HCT116 (cell line): ENCODE measurements at regions of chr19 and their contacts with region 1.

Region 1: GRCh38 chr19:48993175-48994034 is at the starts of genes GYS1 and RUVBL2:
- DNase-seq: peak; percentile 99
- ATAC-seq: peak; percentile 91
- H3K4me3 ChIP-seq: peak within 1 kb of the TSS; percentile 75 to 77
- H3K27ac ChIP-seq: peak within 1 kb of the TSS; percentile 75
- H3K4me1 ChIP-seq: peaks cover 15 to 34% of the 10 kb centered on the region in 2 experiments
- H3K27me3 ChIP-seq: no peaks in the 10 kb centered on the region
- CTCF ChIP-seq: peak; percentile 73 to 85 (median 85)
- POLR2A ChIP-seq: peak; percentile 84
- RAD21 ChIP-seq: no peak; the same call in none of the 2 replicates
- total RNA-seq, gene GYS1: 50.7 TPM
- total RNA-seq, gene RUVBL2: 270 TPM

Region 2: DNA sequence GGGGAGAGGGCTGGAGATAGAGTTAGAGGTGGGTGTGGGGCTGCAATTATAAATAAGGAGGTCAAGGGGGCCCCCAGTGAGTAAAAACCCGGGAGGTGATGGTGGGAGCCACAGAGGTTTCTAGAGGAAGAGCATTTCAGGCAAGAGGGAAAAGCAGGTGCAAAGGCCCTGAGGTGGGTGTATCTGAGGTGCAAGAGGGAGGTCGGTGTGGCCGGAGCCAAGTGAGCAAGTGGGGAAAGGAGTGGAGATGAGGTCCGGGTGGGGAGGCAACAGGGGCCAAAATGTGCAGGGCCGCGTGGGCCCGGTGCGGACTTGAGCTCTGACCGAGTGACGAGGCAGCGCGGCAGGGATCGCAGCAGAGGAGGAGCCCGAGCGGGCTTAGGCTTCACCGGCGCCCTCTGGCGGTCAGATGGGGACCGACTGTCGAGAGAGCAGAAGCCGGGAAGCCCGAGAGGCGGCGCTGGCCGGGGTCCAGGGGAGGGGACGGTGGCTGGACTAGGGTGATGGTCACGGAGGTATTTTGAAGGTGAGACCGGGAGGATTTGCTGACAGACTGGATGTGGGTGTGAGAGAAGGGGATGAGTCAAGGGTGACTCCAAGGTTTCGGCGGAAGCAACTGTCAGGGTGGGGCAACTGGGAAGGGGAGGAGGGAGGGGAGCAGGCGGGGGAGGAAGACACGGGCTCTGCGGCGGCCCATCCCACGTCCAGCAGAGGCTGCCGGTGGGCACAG is 404.6 kb before region 1 on chr19:
- CTCF ChIA-PET with region 1: no interaction called
- POLR2A ChIA-PET with region 1: no interaction called
- RAD21 ChIA-PET with region 1: no interaction called
- intact Hi-C with region 1: no loop called
- DNase-seq: peak; percentile 88
- ATAC-seq: peak; percentile 84
- H3K4me3 ChIP-seq: peak overlapping the region; percentile 35 to 50
- H3K27ac ChIP-seq: no peak overlapping the region
- H3K4me1 ChIP-seq: peaks cover 10 to 28% of the 10 kb centered on the region in 2 experiments
- H3K27me3 ChIP-seq: no peaks in the 10 kb centered on the region
- CTCF ChIP-seq: peak; percentile 90 to 97 (median 93)
- POLR2A ChIP-seq: no peak
- RAD21 ChIP-seq: peak; percentile 68

Region 3: DNA sequence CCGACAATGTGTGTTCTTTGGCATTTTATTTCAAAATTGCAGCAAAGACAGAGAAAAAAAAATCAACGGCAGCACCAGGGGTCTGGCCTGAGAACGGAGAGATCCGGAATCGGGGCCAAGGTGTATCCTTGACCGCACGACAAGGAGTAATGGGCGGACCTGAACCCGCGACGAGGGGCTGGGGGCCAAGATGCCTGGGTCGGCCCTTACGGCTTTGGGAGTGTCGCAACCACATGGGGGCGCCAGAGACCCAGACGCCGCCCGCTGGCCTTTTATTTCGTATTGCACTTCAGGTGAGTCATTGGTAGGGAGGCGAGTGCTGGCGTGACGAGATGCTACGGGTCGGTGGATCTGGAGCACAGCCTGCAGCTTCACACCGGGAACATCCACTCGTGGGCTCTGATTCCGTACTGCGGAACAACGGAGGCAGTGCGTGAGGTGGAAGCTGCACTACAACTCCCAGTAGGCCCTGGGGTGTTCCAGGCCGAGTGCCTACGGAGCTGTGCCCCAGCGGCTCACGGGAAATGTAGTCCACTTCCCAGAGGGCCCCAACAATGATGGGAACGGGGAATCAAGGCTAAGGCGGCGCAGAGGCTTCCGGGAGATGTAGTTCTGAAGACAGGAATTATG is 198.2 kb before region 1 on chr19:
- CTCF ChIA-PET with region 1: interaction called, 10 read pairs
- POLR2A ChIA-PET with region 1: no interaction called
- RAD21 ChIA-PET with region 1: interaction called in 1 of 2 experiments, 3 read pairs
- intact Hi-C with region 1: no loop called
- DNase-seq: peak; percentile 81
- ATAC-seq: peak; percentile 99
- H3K4me3 ChIP-seq: peak overlapping the region; percentile 10 to 27; a peak in 3 of 4 replicates
- H3K27ac ChIP-seq: peak overlapping the region; percentile 41
- H3K4me1 ChIP-seq: peaks cover 0 to 11% of the 10 kb centered on the region in 2 experiments; a peak in 1 of 4 replicates
- H3K27me3 ChIP-seq: no peaks in the 10 kb centered on the region
- CTCF ChIP-seq: peak; percentile 93 to 96 (median 93)
- POLR2A ChIP-seq: no peak
- RAD21 ChIP-seq: peak; percentile 99

Region 4: DNA sequence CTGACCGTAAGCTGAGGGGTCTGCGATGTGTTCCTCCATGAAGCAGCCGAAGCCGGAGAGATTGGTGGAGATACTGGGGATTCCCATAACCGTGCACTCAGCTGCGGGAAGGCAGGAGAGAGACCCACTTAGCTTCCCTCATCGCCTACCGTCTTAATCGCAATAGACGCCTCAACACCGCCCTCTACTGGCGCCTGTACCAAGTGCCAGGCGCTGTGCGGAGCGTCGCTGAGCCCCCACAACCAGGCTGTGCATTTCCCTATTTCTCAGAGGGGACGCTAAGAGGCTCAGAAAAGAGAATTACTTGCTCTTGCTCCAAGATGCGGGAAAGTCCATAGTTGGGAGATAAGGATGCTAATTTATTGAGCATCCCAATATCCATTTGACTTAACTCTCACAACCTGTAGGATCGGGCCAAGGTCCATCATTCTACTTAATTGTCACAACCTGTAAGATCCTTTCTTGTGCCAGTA is 22.4 kb before region 1 on chr19:
- CTCF ChIA-PET with region 1: interaction called, 28 read pairs
- POLR2A ChIA-PET with region 1: interaction called, 11 read pairs
- RAD21 ChIA-PET with region 1: no interaction called
- intact Hi-C with region 1: no loop called
- DNase-seq: no peak
- ATAC-seq: peak; percentile 71
- H3K4me3 ChIP-seq: no peak overlapping the region
- H3K27ac ChIP-seq: no peak overlapping the region
- H3K4me1 ChIP-seq: peaks cover 0 to 22% of the 10 kb centered on the region in 2 experiments; a peak in 3 of 4 replicates
- H3K27me3 ChIP-seq: no peaks in the 10 kb centered on the region
- CTCF ChIP-seq: peak in 2 of 3 experiments; percentile 94 to 95; a peak in 4 of 6 replicates
- POLR2A ChIP-seq: no peak
- RAD21 ChIP-seq: peak; percentile 88

Region 5: DNA sequence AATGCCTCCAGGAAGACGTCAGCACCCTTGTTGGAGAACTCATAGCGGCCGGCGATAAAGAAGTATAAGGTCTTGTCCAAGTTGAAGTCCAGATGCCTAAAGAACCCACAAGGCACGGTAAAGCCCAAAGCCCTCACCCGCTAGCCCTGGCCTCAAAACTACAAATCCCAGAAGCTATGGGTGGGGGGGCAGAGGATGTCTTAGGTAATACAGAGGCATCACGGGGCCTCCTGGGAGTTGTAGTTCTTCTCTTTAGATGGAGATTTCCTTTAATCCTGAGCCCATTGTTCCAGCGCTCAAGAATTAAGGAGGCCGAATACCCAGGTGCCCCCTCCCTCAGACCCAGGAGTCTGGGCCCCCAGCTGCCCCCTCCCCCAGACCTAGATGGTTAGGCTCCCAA is 11.1 kb before region 1 on chr19:
- CTCF ChIA-PET with region 1: interaction called, 29 read pairs
- POLR2A ChIA-PET with region 1: interaction called, 17 read pairs
- RAD21 ChIA-PET with region 1: no interaction called
- intact Hi-C with region 1: no loop called
- DNase-seq: no peak
- ATAC-seq: no peak
- H3K4me3 ChIP-seq: no peak overlapping the region
- H3K27ac ChIP-seq: no peak overlapping the region
- H3K4me1 ChIP-seq: peaks cover 5 to 14% of the 10 kb centered on the region in 2 experiments; a peak in 3 of 4 replicates
- H3K27me3 ChIP-seq: no peaks in the 10 kb centered on the region
- CTCF ChIP-seq: no peak
- POLR2A ChIP-seq: no peak
- RAD21 ChIP-seq: no peak

Region 6: DNA sequence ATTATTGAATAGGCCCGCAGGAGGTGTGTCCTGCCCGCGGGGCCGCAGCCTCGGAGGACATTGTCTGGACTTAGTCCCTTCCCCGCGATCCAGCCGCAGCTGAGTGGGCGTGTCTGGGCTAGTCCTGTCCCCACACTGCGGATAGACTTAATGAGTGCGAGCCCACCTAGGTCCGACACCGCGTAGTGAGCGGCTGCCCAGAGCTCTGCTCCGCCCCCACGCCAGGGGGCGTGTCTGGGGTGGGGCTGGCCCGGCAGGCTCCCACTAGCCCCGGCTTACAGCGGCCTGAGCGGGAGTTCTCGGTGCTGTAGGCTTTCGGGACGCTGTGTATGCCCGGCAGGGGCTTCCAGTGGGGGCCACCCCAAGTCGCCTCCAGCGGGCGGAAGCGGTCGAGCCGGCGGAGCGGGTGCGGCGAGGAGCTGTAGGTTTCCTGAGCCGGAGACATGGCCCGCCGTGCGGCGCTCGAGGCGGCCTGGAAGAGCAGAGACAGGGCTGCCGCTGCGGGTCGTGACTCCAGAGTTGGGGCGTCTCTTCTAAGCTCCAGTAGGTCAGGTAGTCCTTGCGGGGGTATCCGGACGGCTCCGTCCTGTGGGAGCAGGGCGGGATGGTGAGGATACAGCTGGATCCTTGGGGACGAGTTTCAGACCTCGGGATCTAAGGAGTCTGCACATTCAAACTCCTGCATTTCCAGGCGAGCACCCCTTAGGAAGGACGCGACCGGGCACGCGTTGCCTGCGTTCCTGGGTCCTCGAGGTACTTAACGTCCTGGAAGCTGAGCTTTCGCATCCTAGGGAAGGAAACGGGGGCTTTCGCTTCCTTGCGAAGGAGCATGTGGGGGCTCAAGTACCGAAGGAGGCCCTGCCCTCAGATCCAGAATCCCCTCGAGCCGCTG is 62.9 kb after region 1 on chr19:
- CTCF ChIA-PET with region 1: interaction called, 20 read pairs
- POLR2A ChIA-PET with region 1: interaction called, 4 read pairs
- RAD21 ChIA-PET with region 1: no interaction called
- intact Hi-C with region 1: no loop called
- DNase-seq: peak; percentile 34
- ATAC-seq: peak; percentile 86
- H3K4me3 ChIP-seq: peak overlapping the region; percentile 65 to 67
- H3K27ac ChIP-seq: peak overlapping the region; percentile 81
- H3K4me1 ChIP-seq: peaks cover 17 to 56% of the 10 kb centered on the region in 2 experiments
- H3K27me3 ChIP-seq: no peaks in the 10 kb centered on the region
- CTCF ChIP-seq: peak in 1 of 3 experiments; percentile 12; a peak in 1 of 6 replicates
- POLR2A ChIP-seq: peak; percentile 30
- RAD21 ChIP-seq: no peak

Region 7: GRCh38 chr19:49244256-49244655 is 250.9 kb after region 1 on chr19:
- CTCF ChIA-PET with region 1: no interaction called
- POLR2A ChIA-PET with region 1: no interaction called
- RAD21 ChIA-PET with region 1: no interaction called
- intact Hi-C with region 1: no loop called
- DNase-seq: no peak
- ATAC-seq: no peak
- H3K4me3 ChIP-seq: no peak overlapping the region
- H3K27ac ChIP-seq: no peak overlapping the region
- H3K4me1 ChIP-seq: no peaks in the 10 kb centered on the region
- H3K27me3 ChIP-seq: no peaks in the 10 kb centered on the region
- CTCF ChIP-seq: no peak
- POLR2A ChIP-seq: no peak
- RAD21 ChIP-seq: no peak